ENCODE measurements at regions of chr7 and their contacts with region 1.

Region 1: DNA sequence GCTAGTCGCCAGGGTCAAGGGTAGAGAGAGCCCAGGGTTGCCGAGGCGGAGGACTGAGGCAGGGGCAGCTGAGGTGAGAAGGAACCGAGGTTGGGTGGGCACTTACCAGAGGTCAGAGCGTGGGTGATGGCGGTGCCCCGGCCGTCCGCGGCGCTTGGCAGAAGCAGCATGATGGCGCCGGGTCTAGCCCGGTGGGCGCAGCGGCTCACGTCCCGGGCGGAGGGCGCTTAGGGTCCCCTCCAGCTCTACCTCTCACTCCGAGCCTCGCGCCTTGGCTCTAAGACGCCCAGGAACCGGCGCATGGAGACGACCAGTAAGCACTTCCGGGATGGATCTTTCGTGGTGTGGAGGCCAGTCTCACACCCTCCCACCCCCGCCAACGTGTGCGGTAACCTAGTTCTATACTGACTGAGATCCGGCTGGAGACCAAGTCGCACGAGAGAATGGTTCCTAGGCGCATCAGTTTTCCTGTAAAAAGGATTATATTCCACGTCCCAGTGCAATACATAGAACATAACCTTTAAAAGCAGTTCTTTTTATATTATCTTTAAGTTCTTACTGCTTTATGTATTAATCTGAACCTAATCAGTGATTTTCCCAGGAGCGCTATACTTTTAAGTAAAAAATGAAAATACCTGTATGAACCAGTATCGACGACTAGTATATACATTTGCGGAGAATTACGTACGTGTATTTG is at the start of gene DNAJC2:
- DNase-seq: peak; percentile 94
- ATAC-seq: peak; percentile 95
- total RNA-seq, gene DNAJC2: 12.9 TPM

Region 2: GRCh38 chr7:103296901-103297836 is 47.4 kb before region 1 on chr7 and contains the start of gene PMPCB:
- intact Hi-C with region 1: loop called (anchors 5 kb)
- DNase-seq: peak; percentile 99
- ATAC-seq: peak; percentile 98
- total RNA-seq, gene PMPCB: 69.7 TPM